ENCODE measurements at regions of chr22 and their contacts with region 1.

Region 1: GRCh38 chr22:21982338-21982965 is at the start of gene TOP3B:
- DNase-seq: peak; percentile 79 to 86 (median 84)
- H3K4me3 ChIP-seq: peak within 1 kb of the TSS; percentile 84 to 99 (median 96)
- H3K27ac ChIP-seq: peak within 1 kb of the TSS; percentile 70 to 94
- H3K4me1 ChIP-seq: peaks cover 0 to 12% (median 10%) of the 10 kb centered on the region in 4 experiments
- H3K27me3 ChIP-seq: no peaks in the 10 kb centered on the region

Region 2: DNA sequence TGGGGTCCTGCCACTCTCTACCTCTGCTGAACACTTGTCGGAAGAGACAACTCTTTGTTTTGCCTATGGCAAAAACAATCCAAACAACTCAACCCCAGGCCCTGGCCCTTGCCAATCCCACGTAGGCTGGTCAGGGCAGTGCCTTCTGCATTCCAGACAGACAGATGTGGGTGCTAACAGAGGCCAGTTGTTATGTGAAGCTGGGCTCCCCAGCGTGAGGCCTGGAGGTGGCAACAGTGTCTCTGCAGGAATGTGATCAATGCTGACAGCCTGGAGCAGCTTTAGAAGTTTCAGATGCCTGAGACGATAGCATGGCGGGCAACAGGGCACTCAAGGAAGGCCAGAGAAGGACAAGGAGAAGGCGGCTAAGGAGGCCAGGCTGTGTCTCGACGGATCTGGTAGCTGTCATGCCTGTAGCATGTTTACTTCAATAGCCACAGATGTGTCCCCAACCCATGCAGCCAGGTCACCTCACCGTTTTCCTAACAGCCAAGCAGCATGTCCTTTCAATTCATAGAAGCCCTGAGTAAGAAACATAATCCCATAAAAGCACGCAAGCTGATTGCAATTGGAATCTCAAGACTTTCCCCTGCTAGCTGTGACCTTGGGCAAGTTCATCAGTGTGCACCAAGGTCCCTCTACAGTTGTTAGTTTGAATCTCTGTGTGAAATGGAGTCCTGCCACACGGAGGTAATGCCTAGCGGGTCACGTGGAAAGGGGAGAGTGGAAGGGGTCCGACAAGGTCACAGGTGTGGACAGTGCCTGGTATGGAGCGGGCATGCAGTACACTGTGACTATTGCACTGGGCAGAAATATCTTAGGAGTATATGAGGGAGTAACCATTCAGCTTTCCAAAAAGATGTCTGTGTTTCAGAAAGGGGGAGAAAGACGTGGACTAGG is 15.6 kb before region 1 on chr22:
- CTCF ChIA-PET with region 1: interaction called, 19 read pairs
- POLR2A ChIA-PET with region 1: no interaction called
- DNase-seq: no peak
- H3K4me3 ChIP-seq: no peak overlapping the region
- H3K27ac ChIP-seq: no peak overlapping the region
- H3K4me1 ChIP-seq: no peaks in the 10 kb centered on the region
- H3K27me3 ChIP-seq: no peaks in the 10 kb centered on the region

Region 3: GRCh38 chr22:21972293-21972779 is 10.1 kb before region 1 on chr22:
- CTCF ChIA-PET with region 1: interaction called, 19 read pairs
- POLR2A ChIA-PET with region 1: no interaction called
- DNase-seq: peak; percentile 58 to 82 (median 77)
- H3K4me3 ChIP-seq: no peak overlapping the region
- H3K27ac ChIP-seq: no peak overlapping the region
- H3K4me1 ChIP-seq: no peaks in the 10 kb centered on the region
- H3K27me3 ChIP-seq: no peaks in the 10 kb centered on the region

Region 4: GRCh38 chr22:22021162-22021750 is 38.8 kb after region 1 on chr22:
- CTCF ChIA-PET with region 1: no interaction called
- POLR2A ChIA-PET with region 1: no interaction called
- DNase-seq: no peak
- H3K4me3 ChIP-seq: no peak overlapping the region
- H3K27ac ChIP-seq: no peak overlapping the region
- H3K4me1 ChIP-seq: peaks cover 0 to 15% (median 5%) of the 10 kb centered on the region in 4 experiments
- H3K27me3 ChIP-seq: no peaks in the 10 kb centered on the region